Transverse colon (tissue), 4 donors: ENCODE measurements at regions of chr5 and their contacts with region 1.

Region 1: DNA sequence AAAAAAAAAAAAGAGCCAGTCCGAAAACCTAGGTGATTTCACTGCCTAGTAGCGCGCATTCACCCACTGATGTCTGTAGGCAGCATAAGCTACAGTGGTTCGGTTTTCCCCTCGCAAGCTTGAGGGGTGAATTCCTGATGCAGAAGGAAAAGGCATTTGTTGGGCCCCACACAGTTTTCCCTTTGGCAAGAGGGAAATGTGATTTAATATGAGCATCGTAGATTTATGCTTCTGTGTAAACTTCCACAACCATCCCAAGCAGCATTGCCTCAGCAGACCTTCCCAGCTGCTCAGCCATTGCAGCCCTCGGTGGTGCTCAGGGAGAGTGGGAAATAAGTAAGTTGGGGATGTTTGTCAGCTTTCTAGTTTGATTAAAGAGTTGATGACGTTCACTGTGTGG is 231.5 kb upstream of the PPP1R2B start:
- DNase-seq: no peak
- H3K4me3 ChIP-seq: no peak overlapping the region
- H3K27ac ChIP-seq: no peak overlapping the region
- H3K4me1 ChIP-seq: no peaks in the 10 kb centered on the region
- H3K27me3 ChIP-seq: no peaks in the 10 kb centered on the region
- CTCF ChIP-seq: no peak
- EP300 ChIP-seq: no peak
- POLR2A ChIP-seq: no peak

Region 2: GRCh38 chr5:154749491-154749890 is 1869.1 kb before region 1 on chr5:
- in situ Hi-C with region 1: no loop called
- intact Hi-C with region 1: loop called (anchors 5 kb)
- DNase-seq: no peak
- H3K4me3 ChIP-seq: no peak overlapping the region
- H3K27ac ChIP-seq: no peak overlapping the region
- H3K4me1 ChIP-seq: peaks cover 10 to 15% (median 13%) of the 10 kb centered on the region in 4 donors
- H3K27me3 ChIP-seq: no peaks in the 10 kb centered on the region
- CTCF ChIP-seq: no peak
- EP300 ChIP-seq: no peak
- POLR2A ChIP-seq: no peak